ENCODE measurements at regions of chr3 and their contacts with region 1.

Region 1: GRCh38 chr3:56988458-56989168 is 71.9 kb upstream of the SPATA12 start:
- DNase-seq: peak; percentile 82
- ATAC-seq: peak; percentile 72
- H3K4me3 Mint-ChIP-seq: peak overlapping the region; percentile 45; the same call in 1 of the 2 replicates
- H3K27ac Mint-ChIP-seq: 0 out of 2 replicates have a peak overlapping the region, but pooled peaks have one; percentile 20
- H3K4me1 Mint-ChIP-seq: peaks cover 26% of the 10 kb centered on the region
- H3K27me3 Mint-ChIP-seq: peaks cover 3% of the 10 kb centered on the region
- CTCF ChIP-seq: peak; percentile 80

Region 2: DNA sequence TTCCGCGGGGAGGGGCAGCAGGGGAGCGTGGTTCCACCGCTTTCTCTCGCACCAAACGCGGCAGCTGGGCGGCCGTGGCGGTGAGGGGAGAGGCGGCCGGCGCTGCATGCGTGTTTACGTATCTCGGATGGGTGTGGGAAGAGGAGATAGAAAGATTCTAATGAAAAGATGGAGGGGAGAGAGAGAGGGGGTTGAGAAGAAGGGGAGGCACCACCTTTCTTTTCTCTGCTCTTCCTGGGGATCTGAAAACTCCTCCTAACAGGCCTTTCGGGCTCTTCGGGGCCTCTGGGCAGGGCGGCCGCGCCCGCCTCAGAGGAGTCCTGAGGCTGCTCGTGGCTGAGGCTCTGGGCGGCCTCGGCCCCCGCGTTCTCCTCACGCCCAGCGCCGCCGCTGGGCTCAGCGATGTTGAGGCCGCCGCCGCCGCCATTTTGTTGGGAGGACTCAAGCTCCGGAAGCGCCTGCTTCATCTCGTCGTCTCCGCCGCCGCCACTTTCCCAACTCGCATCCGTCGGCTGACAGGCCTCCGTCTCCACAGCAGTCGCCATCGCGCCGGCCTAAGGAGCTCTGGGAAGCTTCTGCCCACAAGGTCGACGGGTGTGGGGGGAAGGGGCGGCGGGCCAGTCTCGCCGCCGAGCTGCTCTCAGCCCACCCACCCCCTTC is 306.0 kb before region 1 on chr3:
- CTCF ChIA-PET with region 1: interaction called, 10 read pairs
- POLR2A ChIA-PET with region 1: no interaction called
- DNase-seq: peak; percentile 72
- ATAC-seq: peak; percentile 72
- H3K4me3 Mint-ChIP-seq: peak overlapping the region; percentile 84
- H3K27ac Mint-ChIP-seq: peak overlapping the region; percentile 78
- H3K4me1 Mint-ChIP-seq: peaks cover 38% of the 10 kb centered on the region
- H3K27me3 Mint-ChIP-seq: peaks cover 42% of the 10 kb centered on the region
- CTCF ChIP-seq: no peak

Region 3: DNA sequence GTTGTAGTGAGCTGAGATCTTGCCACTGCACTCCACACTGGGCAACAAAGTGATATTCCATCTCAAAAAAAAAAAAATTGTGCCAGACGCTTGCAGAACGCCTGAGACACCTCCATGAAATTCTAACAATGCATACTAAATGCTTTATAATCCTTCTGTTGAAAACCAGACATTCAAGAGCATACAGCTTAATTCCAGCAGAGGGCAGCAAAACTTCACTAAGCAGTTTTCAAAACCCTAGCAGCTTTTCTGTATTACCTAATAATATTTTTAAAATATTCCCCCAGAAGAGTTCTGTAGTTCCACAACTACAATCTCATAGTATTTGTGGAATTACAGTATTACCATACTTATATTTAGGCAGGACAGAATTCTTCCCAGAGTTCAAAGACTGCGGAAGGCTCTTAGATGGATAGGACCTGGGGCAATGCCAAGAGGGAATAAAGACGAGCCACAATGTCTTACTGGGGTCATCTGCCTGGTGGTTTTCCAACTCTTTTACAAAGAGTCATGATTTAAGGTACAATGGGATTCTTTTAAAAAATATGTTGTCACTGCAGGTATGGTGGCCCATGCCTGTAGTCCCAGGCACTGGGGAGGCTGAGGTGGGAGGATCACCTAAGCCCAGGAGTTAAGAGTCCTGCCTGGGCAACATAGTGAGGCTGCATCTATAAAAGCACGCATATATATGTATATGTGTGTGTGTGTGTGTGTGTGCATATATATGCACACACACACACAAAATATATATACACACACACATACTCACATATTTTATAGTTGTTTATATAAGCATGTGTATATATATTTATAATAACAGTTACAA is 285.9 kb before region 1 on chr3:
- CTCF ChIA-PET with region 1: interaction called, 98 read pairs
- POLR2A ChIA-PET with region 1: no interaction called
- DNase-seq: no peak
- ATAC-seq: 0 out of 2 replicates have a peak, but pooled peaks have one; percentile 39
- H3K4me3 Mint-ChIP-seq: no peak overlapping the region
- H3K27ac Mint-ChIP-seq: no peak overlapping the region
- H3K4me1 Mint-ChIP-seq: peaks cover 7% of the 10 kb centered on the region
- H3K27me3 Mint-ChIP-seq: no peaks in the 10 kb centered on the region; the same call in 1 of the 2 replicates
- CTCF ChIP-seq: peak; percentile 59

Region 4: GRCh38 chr3:56819016-56819809 is 169.4 kb before region 1 on chr3:
- CTCF ChIA-PET with region 1: interaction called, 11 read pairs
- POLR2A ChIA-PET with region 1: no interaction called
- DNase-seq: no peak
- ATAC-seq: no peak
- H3K4me3 Mint-ChIP-seq: no peak overlapping the region
- H3K27ac Mint-ChIP-seq: no peak overlapping the region
- H3K4me1 Mint-ChIP-seq: peaks cover 17% of the 10 kb centered on the region
- H3K27me3 Mint-ChIP-seq: no peaks in the 10 kb centered on the region
- CTCF ChIP-seq: no peak

Region 5: DNA sequence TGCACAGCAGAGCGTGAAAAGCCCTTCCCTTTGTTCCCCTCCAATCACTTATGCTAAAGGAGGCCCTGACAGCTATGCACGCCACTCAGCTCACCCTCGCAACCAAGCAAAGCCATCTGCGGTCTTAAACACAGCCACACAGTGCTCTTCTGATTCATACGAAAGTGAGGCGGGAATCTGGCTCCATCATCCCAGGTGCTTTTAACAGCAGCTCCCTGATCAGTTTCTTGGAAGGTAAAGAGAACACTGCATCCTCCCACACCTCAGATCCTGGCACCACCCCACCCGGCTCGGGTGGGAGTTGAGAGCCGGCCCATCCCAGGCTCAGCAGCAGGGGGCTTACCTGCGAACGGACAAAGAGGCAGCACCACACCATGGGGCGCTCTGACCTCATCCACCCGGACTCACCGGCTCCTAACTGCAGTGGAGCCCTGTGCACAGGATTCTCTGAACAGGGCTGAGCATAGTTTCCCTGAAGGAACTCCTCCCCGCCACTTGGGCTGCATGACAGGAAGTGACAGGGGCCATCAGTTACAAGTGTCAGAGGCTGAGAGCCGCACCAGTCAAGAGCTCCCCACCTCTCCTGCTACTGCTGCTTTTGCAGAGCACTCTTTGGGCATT is 72.5 kb before region 1 on chr3:
- CTCF ChIA-PET with region 1: interaction called, 10 read pairs
- POLR2A ChIA-PET with region 1: no interaction called
- DNase-seq: peak; percentile 29
- ATAC-seq: peak; percentile 78
- H3K4me3 Mint-ChIP-seq: no peak overlapping the region
- H3K27ac Mint-ChIP-seq: no peak overlapping the region
- H3K4me1 Mint-ChIP-seq: peaks cover 30% of the 10 kb centered on the region
- H3K27me3 Mint-ChIP-seq: no peaks in the 10 kb centered on the region
- CTCF ChIP-seq: no peak

Region 6: GRCh38 chr3:57007513-57008460 is 19.2 kb after region 1 on chr3:
- CTCF ChIA-PET with region 1: interaction called, 13 read pairs
- POLR2A ChIA-PET with region 1: no interaction called
- DNase-seq: no peak
- ATAC-seq: peak; percentile 59
- H3K4me3 Mint-ChIP-seq: no peak overlapping the region
- H3K27ac Mint-ChIP-seq: peak overlapping the region; percentile 1; the same call in 1 of the 2 replicates
- H3K4me1 Mint-ChIP-seq: peaks cover 25% of the 10 kb centered on the region
- H3K27me3 Mint-ChIP-seq: no peaks in the 10 kb centered on the region
- CTCF ChIP-seq: no peak

Region 7: DNA sequence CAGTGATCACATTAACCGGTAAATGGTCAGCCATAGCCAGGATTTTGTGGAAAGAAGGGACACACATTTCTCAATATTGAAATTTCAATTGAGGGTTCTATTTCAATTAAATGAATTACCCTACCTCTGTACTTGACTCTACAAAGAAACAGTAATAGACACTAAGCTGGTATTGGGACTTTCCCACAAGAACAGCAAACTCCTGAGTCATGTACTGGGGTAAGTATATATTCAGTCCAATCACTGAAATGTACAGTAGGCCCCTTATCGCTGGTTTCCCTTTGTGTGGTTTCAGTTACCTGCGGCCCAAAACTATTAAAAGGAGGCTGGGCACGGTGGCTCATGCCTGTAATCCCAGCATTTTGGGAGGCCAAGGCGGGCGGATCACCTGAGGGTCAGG is 286.2 kb after region 1 on chr3:
- CTCF ChIA-PET with region 1: no interaction called
- POLR2A ChIA-PET with region 1: no interaction called
- DNase-seq: no peak
- ATAC-seq: no peak
- H3K4me3 Mint-ChIP-seq: no peak overlapping the region
- H3K27ac Mint-ChIP-seq: no peak overlapping the region
- H3K4me1 Mint-ChIP-seq: no peaks in the 10 kb centered on the region
- H3K27me3 Mint-ChIP-seq: no peaks in the 10 kb centered on the region
- CTCF ChIP-seq: no peak